ENCODE measurements at regions of chr7 and their contacts with region 1.

Region 1: DNA sequence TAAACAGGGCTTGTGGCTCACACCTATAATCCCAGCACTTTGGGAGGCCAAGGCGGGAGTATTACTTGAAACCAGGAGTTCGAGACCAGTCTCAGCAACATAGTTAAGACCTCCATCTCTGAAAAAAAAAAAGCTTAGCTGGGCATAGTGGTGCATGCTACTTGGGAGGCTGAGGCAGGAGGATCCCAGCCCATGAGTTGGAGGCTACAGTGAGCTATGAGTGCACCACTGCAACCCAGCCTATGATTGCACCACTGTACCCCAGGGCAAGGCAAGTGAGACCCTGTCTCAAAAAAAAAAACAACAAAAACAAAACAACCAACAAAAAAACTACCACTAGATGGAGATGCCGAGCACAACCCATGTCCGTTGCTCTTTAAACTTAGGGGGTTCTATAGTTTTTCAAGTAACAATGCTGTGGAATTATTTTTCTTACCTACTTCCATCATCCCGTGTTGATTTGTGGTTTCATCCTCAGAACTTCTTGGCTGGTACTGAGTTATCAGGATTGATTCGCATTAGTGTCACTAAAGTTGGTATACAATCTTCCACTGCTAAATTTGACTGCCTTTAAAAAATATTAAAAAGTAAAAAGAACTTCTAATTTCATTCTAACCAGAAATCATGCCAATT is 12.2 kb upstream of the REPIN1 start:
- DNase-seq: no peak
- H3K4me3 ChIP-seq: no peak overlapping the region
- H3K27ac ChIP-seq: no peak overlapping the region
- H3K4me1 ChIP-seq: peaks cover 3 to 6% (median 5%) of the 10 kb centered on the region in 4 experiments; a peak in 5 of 7 replicates
- H3K27me3 ChIP-seq: no peaks in the 10 kb centered on the region; a peak in 1 of 7 replicates
- CTCF ChIP-seq: peak in 2 of 3 experiments; percentile 60 to 61; a peak in 3 of 4 replicates
- EP300 ChIP-seq: no peak
- POLR2A ChIP-seq: no peak
- RAD21 ChIP-seq: peak; percentile 60 to 70

Region 2: DNA sequence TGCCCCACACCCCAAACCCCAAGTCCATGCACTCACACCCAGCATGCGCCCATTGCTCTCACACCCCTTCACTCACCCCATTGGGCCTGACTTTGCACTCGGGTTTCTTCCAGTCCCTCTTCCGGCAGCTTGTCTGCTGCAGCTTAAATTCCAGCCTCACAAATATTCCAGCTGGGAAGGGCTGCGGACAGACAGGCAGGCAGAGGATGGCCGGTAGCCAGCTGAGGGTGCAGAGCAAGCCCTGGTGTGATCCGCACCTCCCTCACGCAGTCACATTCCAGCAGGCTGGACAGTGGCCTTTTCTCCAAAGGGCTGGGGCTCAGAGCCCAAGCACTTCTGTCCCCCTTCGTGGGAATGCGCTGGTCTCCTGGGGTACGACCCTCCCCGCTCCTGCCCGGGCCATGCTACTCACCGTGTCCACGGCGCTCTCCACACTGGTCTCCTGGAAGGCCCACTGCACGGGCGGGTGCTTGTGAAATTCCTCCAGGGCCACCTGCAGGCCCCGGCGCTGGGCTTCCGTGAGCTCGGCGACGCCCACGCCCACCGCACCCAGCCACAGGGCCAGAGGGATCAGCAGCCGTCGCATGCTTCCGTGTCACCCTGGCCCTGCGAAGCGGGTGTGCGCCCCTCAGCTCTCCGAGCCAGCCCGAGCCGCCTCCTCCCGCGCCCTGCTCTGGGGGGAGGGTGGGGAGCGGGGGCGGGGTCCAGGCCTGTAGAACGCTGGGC is 16.2 kb before region 1 on chr7:
- CTCF ChIA-PET with region 1: interaction called, 41 read pairs
- POLR2A ChIA-PET with region 1: interaction called, 5 read pairs
- DNase-seq: no peak
- H3K4me3 ChIP-seq: peak overlapping the region; percentile 84 to 94 (median 85)
- H3K27ac ChIP-seq: no peak overlapping the region
- H3K4me1 ChIP-seq: peaks cover 15 to 65% (median 38%) of the 10 kb centered on the region in 4 experiments
- H3K27me3 ChIP-seq: peaks cover 0 to 26% (median 20%) of the 10 kb centered on the region in 4 experiments; a peak in 6 of 7 replicates
- CTCF ChIP-seq: no peak
- EP300 ChIP-seq: no peak
- POLR2A ChIP-seq: no peak
- RAD21 ChIP-seq: no peak

Region 3: GRCh38 chr7:150378853-150379440 is 22.6 kb after region 1 on chr7 and contains the start of gene ZNF775:
- CTCF ChIA-PET with region 1: interaction called, 13 read pairs
- POLR2A ChIA-PET with region 1: interaction called, 43 read pairs
- DNase-seq: peak; percentile 89 to 93
- H3K4me3 ChIP-seq: peak within 1 kb of the TSS; percentile 88 to 96 (median 90)
- H3K27ac ChIP-seq: peak within 1 kb of the TSS; percentile 70
- H3K4me1 ChIP-seq: peaks cover 15 to 44% (median 27%) of the 10 kb centered on the region in 4 experiments
- H3K27me3 ChIP-seq: no peaks in the 10 kb centered on the region
- CTCF ChIP-seq: no peak
- EP300 ChIP-seq: no peak
- POLR2A ChIP-seq: peak in 1 of 2 experiments; percentile 79; a peak in 2 of 3 replicates
- RAD21 ChIP-seq: no peak; a peak in 1 of 4 replicates
- total RNA-seq, gene ZNF775: 21.5 and 24.9 TPM in 2 replicates

Region 4: GRCh38 chr7:150388709-150389531 is 32.5 kb after region 1 on chr7:
- CTCF ChIA-PET with region 1: interaction called, 11 read pairs
- POLR2A ChIA-PET with region 1: interaction called, 4 read pairs
- DNase-seq: no peak
- H3K4me3 ChIP-seq: no peak overlapping the region
- H3K27ac ChIP-seq: no peak overlapping the region
- H3K4me1 ChIP-seq: peaks cover 19 to 29% (median 24%) of the 10 kb centered on the region in 4 experiments
- H3K27me3 ChIP-seq: no peaks in the 10 kb centered on the region
- CTCF ChIP-seq: peak; percentile 64 to 69 (median 68)
- EP300 ChIP-seq: no peak
- POLR2A ChIP-seq: no peak
- RAD21 ChIP-seq: peak; percentile 75 to 80

Region 5: DNA sequence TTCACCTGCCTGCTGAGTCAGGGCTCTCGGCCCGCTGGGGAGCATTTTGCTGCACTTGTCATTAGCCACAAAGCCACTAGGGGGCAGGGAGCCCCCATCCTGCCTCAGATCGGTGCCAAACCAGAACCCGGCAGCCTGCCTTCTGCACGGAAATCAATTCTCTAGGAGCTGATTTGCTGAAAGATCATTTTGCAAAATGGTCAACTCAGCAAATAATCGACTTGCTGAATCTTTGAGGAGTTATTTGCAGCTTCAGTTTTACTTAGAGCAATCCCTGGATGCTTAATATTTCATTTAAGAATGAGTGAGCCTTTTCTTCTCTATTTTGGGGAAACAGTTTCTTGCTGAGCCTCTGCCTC is 92.4 kb after region 1 on chr7:
- CTCF ChIA-PET with region 1: no interaction called
- POLR2A ChIA-PET with region 1: no interaction called
- DNase-seq: peak; percentile 47 to 91
- H3K4me3 ChIP-seq: no peak overlapping the region
- H3K27ac ChIP-seq: no peak overlapping the region
- H3K4me1 ChIP-seq: peaks cover 3 to 7% (median 3%) of the 10 kb centered on the region in 4 experiments; a peak in 5 of 7 replicates
- H3K27me3 ChIP-seq: peaks cover 0 to 12% (median 4%) of the 10 kb centered on the region in 4 experiments; a peak in 4 of 7 replicates
- CTCF ChIP-seq: peak; percentile 91 to 97 (median 95)
- EP300 ChIP-seq: no peak
- POLR2A ChIP-seq: no peak
- RAD21 ChIP-seq: peak; percentile 98 to 100

Region 6: DNA sequence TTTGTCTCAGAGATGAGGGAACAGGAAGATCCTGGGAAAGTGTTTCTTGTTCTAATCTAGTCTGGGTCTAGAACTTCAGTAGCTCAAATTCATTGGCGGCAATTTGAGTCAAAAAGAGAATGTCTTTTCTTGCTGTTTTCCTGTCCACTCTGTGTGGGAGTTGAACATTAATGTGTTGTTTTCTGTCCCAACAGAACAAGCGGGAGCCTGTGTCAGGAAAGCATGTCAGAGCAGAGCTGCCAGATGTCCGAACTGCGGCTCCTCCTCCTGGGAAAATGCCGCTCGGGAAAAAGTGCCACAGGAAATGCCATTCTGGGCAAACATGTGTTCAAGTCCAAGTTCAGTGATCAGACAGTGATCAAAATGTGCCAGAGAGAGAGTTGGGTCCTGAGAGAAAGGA is 110.1 kb after region 1 on chr7:
- CTCF ChIA-PET with region 1: no interaction called
- POLR2A ChIA-PET with region 1: no interaction called
- DNase-seq: no peak
- H3K4me3 ChIP-seq: no peak overlapping the region
- H3K27ac ChIP-seq: no peak overlapping the region
- H3K4me1 ChIP-seq: no peaks in the 10 kb centered on the region
- H3K27me3 ChIP-seq: peaks cover 0 to 2% (median 0%) of the 10 kb centered on the region in 4 experiments; a peak in 1 of 7 replicates
- CTCF ChIP-seq: no peak
- EP300 ChIP-seq: no peak
- POLR2A ChIP-seq: no peak
- RAD21 ChIP-seq: no peak

Measured in H1 (cell line).